A549 (cell line): ENCODE measurements at regions of chr12 and their contacts with region 1.

Region 1: GRCh38 chr12:122356192-122356635 is 66.3 kb downstream of the CLIP1 start:
- DNase-seq: peak; percentile 22 to 77
- ATAC-seq: peak; percentile 96 to 97
- H3K4me3 ChIP-seq: no peak overlapping the region
- H3K27ac ChIP-seq: no peak overlapping the region
- H3K4me1 ChIP-seq: no peaks in the 10 kb centered on the region
- CTCF ChIP-seq: peak; percentile 86
- EP300 ChIP-seq: no peak
- POLR2A ChIP-seq: no peak
- RAD21 ChIP-seq: peak; percentile 47 to 63

Region 2: DNA sequence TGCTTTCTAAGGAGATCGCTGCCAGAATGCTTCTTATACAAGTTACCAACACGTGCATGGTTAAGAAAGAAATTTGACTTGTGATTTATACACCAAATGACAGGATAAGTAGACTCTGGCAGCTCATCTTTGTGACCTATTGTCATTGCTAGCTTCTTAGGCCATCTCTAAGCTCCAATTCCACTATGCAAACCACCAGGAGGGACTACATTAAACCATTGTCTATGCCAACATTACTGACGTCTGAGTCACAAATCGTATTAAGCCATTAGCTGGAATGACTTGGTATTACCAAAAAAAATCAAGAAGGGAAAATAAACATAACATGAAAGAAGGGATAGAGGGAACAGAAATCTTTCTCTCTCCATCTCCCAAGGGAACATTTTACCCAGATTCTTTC is 74.1 kb before region 1 on chr12:
- CTCF ChIA-PET with region 1: interaction called, 10 read pairs
- POLR2A ChIA-PET with region 1: no interaction called
- DNase-seq: peak in 1 of 2 experiments; percentile 29
- ATAC-seq: peak in 1 of 2 experiments; percentile 56; a peak in 3 of 6 replicates
- H3K4me3 ChIP-seq: no peak overlapping the region
- H3K27ac ChIP-seq: no peak overlapping the region
- H3K4me1 ChIP-seq: peaks cover 10% of the 10 kb centered on the region; the same call in 2 of the 3 replicates
- CTCF ChIP-seq: no peak
- EP300 ChIP-seq: no peak
- POLR2A ChIP-seq: no peak
- RAD21 ChIP-seq: no peak

Region 3: DNA sequence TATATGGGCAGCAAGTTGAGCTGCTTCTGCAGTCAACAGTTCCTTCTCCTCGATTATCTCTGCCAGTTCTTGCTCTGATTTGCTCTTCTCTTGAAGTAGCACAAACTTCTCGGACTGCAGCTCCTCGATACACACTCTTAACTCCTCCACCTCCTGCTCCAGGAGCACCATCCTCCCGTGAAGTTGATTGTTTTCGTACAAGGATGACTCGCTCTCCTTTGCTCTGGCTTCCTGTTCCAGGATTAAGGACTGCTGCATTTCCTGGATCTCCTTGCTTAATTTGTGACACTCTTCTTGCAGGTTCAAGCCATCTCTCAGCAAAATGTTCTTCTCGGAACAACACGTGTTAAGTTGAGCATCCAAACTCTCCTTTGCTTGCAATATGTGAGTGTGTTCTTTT is 33.7 kb before region 1 on chr12:
- CTCF ChIA-PET with region 1: interaction called, 26 read pairs
- POLR2A ChIA-PET with region 1: no interaction called
- DNase-seq: no peak
- ATAC-seq: no peak
- H3K4me3 ChIP-seq: no peak overlapping the region
- H3K27ac ChIP-seq: no peak overlapping the region
- H3K4me1 ChIP-seq: peaks cover 11% of the 10 kb centered on the region; the same call in 2 of the 3 replicates
- CTCF ChIP-seq: no peak
- EP300 ChIP-seq: no peak
- POLR2A ChIP-seq: no peak
- RAD21 ChIP-seq: no peak

Region 4: GRCh38 chr12:122366685-122367475 is 10.7 kb after region 1 on chr12:
- CTCF ChIA-PET with region 1: interaction called, 27 read pairs
- POLR2A ChIA-PET with region 1: no interaction called
- DNase-seq: peak; percentile 86 to 88
- ATAC-seq: peak; percentile 86 to 90; a peak in 5 of 6 replicates
- H3K4me3 ChIP-seq: no peak overlapping the region
- H3K27ac ChIP-seq: peak overlapping the region; percentile 86 to 95
- H3K4me1 ChIP-seq: peaks cover 47% of the 10 kb centered on the region
- CTCF ChIP-seq: no peak
- EP300 ChIP-seq: peak; percentile 19 to 49; a peak in 1 of 5 replicates
- POLR2A ChIP-seq: no peak
- RAD21 ChIP-seq: no peak

Region 5: DNA sequence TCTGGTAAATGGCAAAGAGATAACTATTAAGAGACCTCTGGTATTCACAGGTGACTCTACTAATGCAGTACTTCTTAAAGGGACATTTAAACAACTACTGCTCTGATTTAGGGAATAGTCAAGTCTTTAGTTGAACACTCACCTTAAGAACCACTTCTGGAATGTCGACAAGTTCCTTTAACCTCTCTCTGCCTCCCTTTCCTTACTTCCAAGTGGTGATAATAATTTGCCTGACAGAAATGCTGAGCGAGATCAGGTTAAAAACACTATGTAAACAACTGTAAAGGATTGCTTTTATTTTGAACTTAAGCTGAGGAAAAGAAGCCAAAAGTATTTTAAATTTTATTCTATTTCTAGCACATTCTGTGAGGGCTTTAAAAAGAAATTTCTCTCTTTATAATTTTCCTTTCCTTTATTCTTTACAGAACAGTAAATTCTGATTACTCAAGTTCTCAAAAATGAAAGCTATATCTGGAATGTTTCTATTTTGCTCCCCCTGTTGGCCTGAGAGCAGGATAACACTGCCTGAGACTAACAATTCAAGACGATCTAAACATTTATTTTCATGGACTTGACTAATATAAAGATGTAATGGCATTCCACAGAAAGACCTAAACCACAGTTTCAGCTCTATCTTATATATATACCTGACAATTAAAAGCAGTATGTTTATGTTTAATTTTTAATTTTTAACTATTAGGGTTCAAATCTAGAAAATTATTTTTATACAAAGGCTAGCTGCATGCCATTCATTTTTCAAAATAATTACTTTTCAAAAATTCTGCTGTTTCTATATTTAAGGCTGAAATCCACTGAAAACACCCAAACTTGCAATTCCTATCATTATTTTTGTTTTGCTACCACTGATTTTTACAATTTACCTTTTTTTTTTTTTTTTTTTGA is 115.4 kb after region 1 on chr12:
- CTCF ChIA-PET with region 1: interaction called, 26 read pairs
- POLR2A ChIA-PET with region 1: no interaction called
- DNase-seq: peak; percentile 29 to 83
- ATAC-seq: peak; percentile 75 to 77; a peak in 5 of 6 replicates
- H3K4me3 ChIP-seq: no peak overlapping the region; the same call in 2 of the 3 replicates
- H3K27ac ChIP-seq: peak overlapping the region; percentile 52 to 74
- H3K4me1 ChIP-seq: peaks cover 6% of the 10 kb centered on the region
- CTCF ChIP-seq: peak; percentile 84
- EP300 ChIP-seq: no peak
- POLR2A ChIP-seq: no peak
- RAD21 ChIP-seq: peak; percentile 83 to 87

Region 6: DNA sequence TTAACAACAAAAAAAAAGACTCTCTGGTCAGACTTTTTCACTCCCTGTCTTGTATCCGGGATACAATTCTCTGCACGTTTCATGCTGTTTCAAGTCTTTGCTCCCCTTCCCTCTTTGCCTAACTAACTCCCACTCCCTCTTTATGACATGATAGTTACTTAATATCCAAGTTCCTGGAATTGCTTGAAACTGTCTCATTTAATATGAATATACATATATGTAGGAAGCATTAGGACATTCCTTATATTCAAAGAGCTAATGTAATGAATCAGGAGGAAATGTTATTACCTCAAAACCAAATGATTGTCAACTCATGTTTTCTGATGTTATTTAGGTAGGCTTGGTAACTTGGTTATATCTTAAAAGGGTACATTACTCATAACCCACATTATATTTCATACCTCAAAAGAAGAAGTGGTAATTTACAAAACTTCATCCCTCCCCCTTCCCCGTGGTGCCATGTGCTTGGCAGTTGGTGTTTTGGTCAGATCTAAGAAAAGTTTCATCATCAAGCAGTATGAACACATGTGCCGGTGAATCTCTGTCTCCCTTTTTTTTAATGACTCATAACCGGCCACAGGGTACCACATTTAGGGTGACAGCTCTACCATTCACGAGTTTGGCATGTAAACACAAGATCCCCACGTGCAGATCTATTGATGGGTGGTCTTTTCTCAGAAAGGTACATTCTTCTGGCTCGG is 290.5 kb after region 1 on chr12:
- CTCF ChIA-PET with region 1: no interaction called
- POLR2A ChIA-PET with region 1: no interaction called
- DNase-seq: peak in 1 of 2 experiments; percentile 24
- ATAC-seq: peak; percentile 37 to 73; a peak in 3 of 6 replicates
- H3K4me3 ChIP-seq: no peak overlapping the region
- H3K27ac ChIP-seq: peak overlapping the region in 1 of 2 experiments; percentile 62; a peak in 3 of 6 replicates
- H3K4me1 ChIP-seq: peaks cover 6% of the 10 kb centered on the region; the same call in 2 of the 3 replicates
- CTCF ChIP-seq: no peak
- EP300 ChIP-seq: no peak
- POLR2A ChIP-seq: no peak
- RAD21 ChIP-seq: no peak